IMR-90 (cell line): ENCODE measurements at regions of chr2 and their contacts with region 1.

Region 1: GRCh38 chr2:105344704-105345345 is 7.5 kb downstream of the C2orf49 start:
- DNase-seq: peak; percentile 61
- ATAC-seq: peak; percentile 89
- H3K4me3 ChIP-seq: no peak overlapping the region
- H3K27ac ChIP-seq: no peak overlapping the region
- H3K4me1 ChIP-seq: no peaks in the 10 kb centered on the region
- H3K27me3 ChIP-seq: no peaks in the 10 kb centered on the region
- CTCF ChIP-seq: peak; percentile 52
- POLR2A ChIP-seq: no peak
- RAD21 ChIP-seq: peak; percentile 60

Region 2: DNA sequence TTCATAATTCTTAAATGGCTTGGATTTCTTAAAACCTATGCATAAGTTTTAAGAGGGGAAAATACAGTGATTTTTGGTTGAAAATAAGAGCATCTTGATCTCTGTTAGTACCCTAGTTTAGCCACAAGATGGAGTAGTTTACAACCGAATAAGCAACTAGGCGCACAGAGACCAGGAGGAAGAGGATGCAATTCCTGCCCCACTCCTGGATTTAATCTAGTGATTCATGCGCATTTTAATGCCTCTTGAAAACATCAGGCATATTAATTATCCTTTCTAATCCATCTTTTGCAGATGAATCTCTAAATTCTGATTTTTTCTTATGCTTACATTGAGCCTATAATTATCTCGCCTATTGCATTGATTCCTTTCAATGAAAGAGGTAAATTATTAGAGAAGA is 230.3 kb before region 1 on chr2:
- CTCF ChIA-PET with region 1: no interaction called
- POLR2A ChIA-PET with region 1: no interaction called
- dilution Hi-C with region 1: no loop called
- in situ Hi-C with region 1: no loop called
- intact Hi-C with region 1: no loop called
- DNase-seq: peak; percentile 74
- ATAC-seq: peak; percentile 86
- H3K4me3 ChIP-seq: no peak overlapping the region
- H3K27ac ChIP-seq: no peak overlapping the region
- H3K4me1 ChIP-seq: no peaks in the 10 kb centered on the region
- H3K27me3 ChIP-seq: peaks cover 3% of the 10 kb centered on the region; the same call in 1 of the 2 replicates
- CTCF ChIP-seq: peak; percentile 85
- POLR2A ChIP-seq: no peak
- RAD21 ChIP-seq: peak; percentile 89

Region 3: DNA sequence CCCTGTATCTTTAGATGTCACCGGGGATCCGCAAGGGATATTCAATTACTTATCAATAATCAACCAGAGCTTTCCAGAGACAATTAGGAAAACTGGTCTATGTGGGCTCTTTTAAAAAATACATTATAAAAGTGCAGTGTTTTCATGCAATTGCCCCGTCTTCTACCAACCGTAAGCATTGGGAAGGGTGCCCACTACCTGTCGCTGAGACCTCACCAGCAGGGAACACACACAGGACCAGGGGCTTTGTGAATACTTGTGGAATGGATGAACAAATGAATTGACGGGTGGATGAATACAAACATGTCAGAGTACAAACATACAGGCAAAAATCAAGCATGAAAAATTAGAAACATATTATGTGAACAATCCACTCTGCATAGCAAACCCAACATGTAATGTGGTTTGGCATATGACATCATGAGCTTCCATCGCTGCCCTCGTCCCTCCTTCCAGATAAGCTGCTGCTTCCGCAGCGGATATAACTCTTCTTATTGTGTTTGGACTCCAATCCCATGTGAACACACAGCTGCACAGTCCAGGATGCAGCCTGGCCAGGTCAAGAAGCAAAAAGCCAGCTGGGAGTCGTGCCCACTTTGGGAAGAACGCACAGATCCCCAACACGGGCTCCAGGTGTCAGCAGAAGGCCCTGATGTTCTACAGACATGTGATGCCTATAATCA is 48.7 kb after region 1 on chr2:
- CTCF ChIA-PET with region 1: no interaction called
- POLR2A ChIA-PET with region 1: no interaction called
- dilution Hi-C with region 1: no loop called
- in situ Hi-C with region 1: no loop called
- intact Hi-C with region 1: loop called (anchors 5 kb)
- DNase-seq: peak; percentile 73
- ATAC-seq: no peak
- H3K4me3 ChIP-seq: no peak overlapping the region
- H3K27ac ChIP-seq: peak overlapping the region; percentile 98; the same call in 1 of the 2 replicates
- H3K4me1 ChIP-seq: peaks cover 45% of the 10 kb centered on the region
- H3K27me3 ChIP-seq: no peaks in the 10 kb centered on the region
- CTCF ChIP-seq: no peak
- POLR2A ChIP-seq: no peak
- RAD21 ChIP-seq: no peak

Region 4: GRCh38 chr2:105537466-105537865 is 192.6 kb after region 1 on chr2:
- CTCF ChIA-PET with region 1: no interaction called
- POLR2A ChIA-PET with region 1: no interaction called
- dilution Hi-C with region 1: no loop called
- in situ Hi-C with region 1: loop called (anchors 10 kb)
- intact Hi-C with region 1: no loop called
- DNase-seq: no peak
- ATAC-seq: no peak
- H3K4me3 ChIP-seq: no peak overlapping the region
- H3K27ac ChIP-seq: no peak overlapping the region
- H3K4me1 ChIP-seq: no peaks in the 10 kb centered on the region
- H3K27me3 ChIP-seq: peaks cover 43% of the 10 kb centered on the region
- CTCF ChIP-seq: no peak
- POLR2A ChIP-seq: no peak
- RAD21 ChIP-seq: no peak

Region 5: DNA sequence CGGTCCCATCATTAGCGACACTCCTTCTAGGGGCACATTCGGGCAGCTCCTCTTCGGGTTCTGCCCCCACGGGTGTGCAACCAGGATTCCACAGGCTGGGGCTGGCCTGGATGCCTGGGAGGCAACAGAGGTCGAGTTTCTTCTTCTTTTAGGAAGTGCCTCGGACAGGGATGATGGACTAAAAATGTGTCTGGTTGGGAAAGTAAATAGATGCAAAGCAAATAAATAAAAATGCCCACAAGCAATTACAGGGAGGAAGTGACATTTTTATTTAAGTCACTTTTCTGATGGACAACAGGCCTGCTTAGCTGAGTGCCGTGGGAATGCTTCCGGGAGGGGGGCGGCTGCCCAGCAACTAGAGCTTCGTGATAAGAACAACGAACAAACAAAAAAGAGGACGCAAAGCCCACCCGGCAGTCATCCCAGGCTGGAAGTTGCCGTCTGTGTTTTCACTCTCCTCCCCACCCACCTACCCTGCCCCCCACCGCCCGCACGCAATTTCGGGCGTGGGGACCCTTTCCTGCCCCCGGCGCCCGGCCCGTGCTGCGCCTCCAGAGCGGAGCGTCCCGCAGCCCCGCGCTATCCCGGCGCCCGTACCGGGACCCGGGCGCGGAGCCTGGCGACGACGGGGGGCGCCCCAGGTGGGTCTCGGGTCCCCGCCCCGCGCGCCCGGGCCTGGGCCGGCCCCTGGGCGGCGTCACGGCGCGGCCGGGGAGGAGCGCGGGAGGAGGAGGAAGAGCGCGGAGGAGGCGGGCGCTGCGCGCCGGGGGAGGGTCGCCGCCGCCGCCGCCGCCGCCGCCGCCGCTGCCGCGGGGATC is 399.5 kb after region 1 on chr2:
- CTCF ChIA-PET with region 1: no interaction called
- POLR2A ChIA-PET with region 1: no interaction called
- dilution Hi-C with region 1: no loop called
- in situ Hi-C with region 1: no loop called
- intact Hi-C with region 1: loop called (anchors 10 kb)
- DNase-seq: peak; percentile 28
- ATAC-seq: peak; percentile 96
- H3K4me3 ChIP-seq: peak overlapping the region; percentile 87
- H3K27ac ChIP-seq: peak overlapping the region; percentile 10; the same call in 1 of the 2 replicates
- H3K4me1 ChIP-seq: peaks cover 6% of the 10 kb centered on the region
- H3K27me3 ChIP-seq: peaks cover 4% of the 10 kb centered on the region
- CTCF ChIP-seq: no peak
- POLR2A ChIP-seq: no peak
- RAD21 ChIP-seq: no peak

Region 6: DNA sequence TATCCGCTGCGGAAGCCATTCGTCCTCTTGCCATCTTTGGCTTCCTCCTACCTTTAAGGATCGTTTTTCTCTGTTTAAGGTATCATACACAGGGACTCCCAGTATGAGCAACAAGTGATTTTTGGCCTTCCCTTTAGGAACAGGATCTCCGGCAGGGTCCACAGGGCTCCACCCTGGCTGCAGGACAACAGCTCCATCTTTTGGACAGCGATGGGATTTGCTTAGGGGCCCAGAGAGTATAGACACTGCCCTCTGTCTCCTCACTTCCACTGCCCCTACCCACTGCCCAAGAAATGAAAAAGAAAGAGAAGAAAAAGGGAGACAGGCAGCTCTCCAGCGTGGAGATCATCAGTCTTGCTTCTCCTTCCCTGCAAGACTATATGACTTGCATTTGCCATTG is 624.7 kb after region 1 on chr2:
- CTCF ChIA-PET with region 1: no interaction called
- POLR2A ChIA-PET with region 1: no interaction called
- dilution Hi-C with region 1: no loop called
- in situ Hi-C with region 1: no loop called
- intact Hi-C with region 1: no loop called
- DNase-seq: no peak
- ATAC-seq: no peak
- H3K4me3 ChIP-seq: no peak overlapping the region
- H3K27ac ChIP-seq: no peak overlapping the region
- H3K4me1 ChIP-seq: no peaks in the 10 kb centered on the region
- H3K27me3 ChIP-seq: peaks cover 17% of the 10 kb centered on the region
- CTCF ChIP-seq: peak; percentile 27; the same call in 1 of the 2 replicates
- POLR2A ChIP-seq: no peak
- RAD21 ChIP-seq: 0 out of 2 replicates have a peak, but pooled peaks have one; percentile 25

Region 7: GRCh38 chr2:106085181-106085940 is 740.5 kb after region 1 on chr2:
- CTCF ChIA-PET with region 1: no interaction called
- POLR2A ChIA-PET with region 1: no interaction called
- dilution Hi-C with region 1: no loop called
- in situ Hi-C with region 1: no loop called
- intact Hi-C with region 1: loop called (anchors 10 kb)
- DNase-seq: peak; percentile 39
- ATAC-seq: peak; percentile 92
- H3K4me3 ChIP-seq: no peak overlapping the region
- H3K27ac ChIP-seq: no peak overlapping the region
- H3K4me1 ChIP-seq: no peaks in the 10 kb centered on the region
- H3K27me3 ChIP-seq: peaks cover 10% of the 10 kb centered on the region
- CTCF ChIP-seq: peak; percentile 50
- POLR2A ChIP-seq: no peak
- RAD21 ChIP-seq: peak; percentile 53